ENCODE measurements at regions of chr12 and their contacts with region 1.

Region 1: DNA sequence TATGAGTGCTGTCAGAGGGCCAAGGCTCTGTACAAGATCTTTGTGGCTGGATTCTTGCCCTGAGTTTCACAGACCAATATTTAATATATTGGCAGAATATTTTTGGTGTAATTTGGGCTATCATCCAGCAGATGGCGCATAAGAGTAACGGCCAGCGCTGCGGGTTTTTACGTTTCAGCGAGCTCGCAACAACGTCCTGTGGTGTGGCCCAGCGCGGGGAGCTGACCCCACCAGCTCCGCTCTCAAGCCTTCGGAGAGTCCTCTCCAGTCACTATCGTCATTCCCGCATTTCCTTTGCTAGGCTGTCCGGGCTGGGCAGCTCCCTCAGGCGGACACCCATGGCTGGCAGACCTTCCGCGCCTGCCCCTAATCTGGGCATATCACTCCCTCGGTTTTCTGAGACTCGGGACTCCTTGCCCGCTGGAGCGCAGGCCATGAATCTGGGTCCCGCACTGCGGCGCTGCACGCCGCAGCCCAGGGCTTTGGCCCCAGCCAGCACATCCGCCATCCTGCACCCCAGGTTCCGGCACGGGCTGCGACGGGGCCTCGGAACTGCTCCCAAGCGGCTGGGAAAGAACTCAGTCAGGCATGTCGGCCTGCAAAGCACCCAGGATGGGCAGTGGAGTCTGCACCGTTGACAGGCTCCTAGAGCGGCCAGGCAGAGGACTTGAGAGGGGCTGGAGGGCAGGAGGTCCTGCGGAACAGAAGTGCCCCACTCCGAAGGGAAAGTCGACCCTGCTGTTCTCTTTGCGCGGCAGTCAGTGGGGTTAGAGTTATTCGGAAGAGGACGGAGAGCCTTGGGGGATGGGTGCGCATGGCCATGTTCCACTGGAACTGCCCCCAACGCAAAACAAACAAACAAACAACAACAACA is 18.4 kb downstream of the OLR1 start:
- DNase-seq: peak; percentile 74
- H3K4me3 ChIP-seq: peak overlapping the region; percentile 48
- H3K27ac ChIP-seq: peak overlapping the region; percentile 25
- H3K4me1 ChIP-seq: no peaks in the 10 kb centered on the region
- H3K27me3 ChIP-seq: no peaks in the 10 kb centered on the region
- CTCF ChIP-seq: peak; percentile 82

Region 2: GRCh38 chr12:10190558-10191388 is 37.3 kb after region 1 on chr12:
- CTCF ChIA-PET with region 1: interaction called, 5 read pairs
- POLR2A ChIA-PET with region 1: no interaction called
- intact Hi-C with region 1: loop called (anchors 1 kb)
- DNase-seq: peak; percentile 78
- H3K4me3 ChIP-seq: no peak overlapping the region
- H3K27ac ChIP-seq: no peak overlapping the region
- H3K4me1 ChIP-seq: no peaks in the 10 kb centered on the region
- H3K27me3 ChIP-seq: no peaks in the 10 kb centered on the region
- CTCF ChIP-seq: peak; percentile 81

Measured in A673 (cell line).